Activated naive CD8-positive, alpha-beta T cell treated with anti-CD3 and anti-CD28 coated beads, Interleukin-2, amount 10 ng/mL, durations not matched to agents 7 days and 5 days (primary cell): ENCODE measurements at regions of chr16 and their contacts with region 1.

Region 1: DNA sequence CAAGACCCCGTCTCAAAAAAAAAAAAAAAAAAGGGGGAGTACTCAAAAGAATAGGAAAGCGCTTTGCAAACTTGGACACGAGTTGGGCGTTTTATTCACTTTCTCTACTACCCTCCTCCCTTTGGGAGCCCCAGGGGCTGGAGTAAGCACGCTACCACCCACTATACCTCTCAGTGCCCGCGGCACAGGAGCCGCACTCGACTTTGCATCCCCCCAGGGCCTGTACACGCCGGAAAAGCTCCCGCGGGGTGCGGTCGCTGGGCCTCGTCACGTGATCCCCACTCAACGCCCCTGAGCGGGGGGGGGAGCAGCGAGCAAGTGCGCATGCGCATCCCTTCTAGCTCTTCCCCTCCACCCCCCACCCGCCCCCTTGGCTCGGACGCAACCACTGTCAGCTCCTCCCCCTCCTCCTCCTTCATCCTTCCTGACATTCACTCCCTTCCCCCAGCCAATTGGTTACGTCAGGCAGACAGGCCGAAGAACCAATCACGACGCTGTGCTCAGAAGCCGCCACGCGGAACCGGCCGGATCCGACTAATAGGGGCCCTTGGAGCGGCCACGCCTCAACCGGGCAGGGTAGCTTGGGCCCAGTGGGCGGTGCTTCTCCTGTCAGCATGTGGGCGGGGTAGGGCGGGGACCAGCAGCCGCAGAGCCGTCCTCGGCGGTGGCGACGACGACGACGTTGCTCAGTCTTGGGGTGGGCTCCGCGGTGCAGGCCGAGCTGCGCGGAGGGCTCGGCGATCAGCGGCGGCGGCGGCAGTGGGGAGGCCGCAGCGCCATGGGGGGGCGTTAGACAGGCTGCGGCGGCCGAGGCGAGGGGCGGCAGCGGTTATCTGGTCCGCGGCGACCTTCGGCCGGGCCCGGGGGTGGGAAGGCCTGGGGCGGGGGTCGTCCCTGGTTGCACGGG is at the start of gene HAPSTR1:
- DNase-seq: peak; percentile 98
- ATAC-seq: peak; percentile 90
- H3K4me3 Mint-ChIP-seq: peak within 1 kb of the TSS; percentile 98
- H3K27ac Mint-ChIP-seq: peak within 1 kb of the TSS; percentile 99
- H3K4me1 Mint-ChIP-seq: peaks cover 22% of the 10 kb centered on the region
- H3K27me3 Mint-ChIP-seq: no peaks in the 10 kb centered on the region
- total RNA-seq, gene HAPSTR1: 71.6 to 72.2 TPM

Region 2: GRCh38 chr16:8868416-8869211 is 222.6 kb before region 1 on chr16 and contains the start of gene CARHSP1:
- POLR2A ChIA-PET with region 1: interaction called, 44 read pairs
- DNase-seq: peak; percentile 89
- ATAC-seq: peak; percentile 76
- H3K4me3 Mint-ChIP-seq: peak within 1 kb of the TSS; percentile 96
- H3K27ac Mint-ChIP-seq: peak within 1 kb of the TSS; percentile 97
- H3K4me1 Mint-ChIP-seq: peaks cover 40% of the 10 kb centered on the region
- H3K27me3 Mint-ChIP-seq: no peaks in the 10 kb centered on the region
- total RNA-seq, gene CARHSP1: 157 to 173 TPM

Region 3: DNA sequence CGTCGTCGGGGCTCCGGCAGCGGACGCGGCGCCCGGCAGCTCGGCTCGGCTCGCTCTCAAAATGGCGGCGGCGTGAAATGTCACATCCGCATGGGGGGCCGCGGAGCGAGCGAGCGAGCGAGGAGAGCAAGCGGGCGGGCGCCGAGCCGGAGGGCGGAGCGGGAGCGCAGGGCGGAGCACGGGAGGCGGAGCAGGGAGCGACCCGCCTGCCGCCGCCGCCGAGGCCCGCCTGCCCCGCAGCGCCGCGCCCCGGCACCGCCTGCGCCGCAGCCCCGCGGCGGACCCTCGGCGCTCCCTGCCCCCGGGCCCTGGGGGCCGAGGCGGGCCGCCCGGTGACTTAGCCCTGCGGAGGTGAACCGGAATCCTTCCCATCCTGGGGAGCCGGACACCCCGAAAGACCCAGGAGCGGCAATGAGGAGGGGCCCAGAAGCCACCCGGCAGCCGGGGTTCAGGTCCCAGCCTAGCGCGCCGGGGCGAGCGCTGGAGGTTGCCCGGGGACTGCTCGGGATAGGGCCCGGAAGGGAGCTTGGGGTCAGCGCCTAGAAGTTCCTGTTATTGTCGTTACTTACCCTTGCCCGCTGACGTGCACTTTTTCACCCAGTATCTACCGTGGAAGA is 127.3 kb before region 1 on chr16 and contains the start of gene USP7:
- POLR2A ChIA-PET with region 1: interaction called, 21 read pairs
- DNase-seq: peak; percentile 95
- ATAC-seq: peak; percentile 90
- H3K4me3 Mint-ChIP-seq: peak within 1 kb of the TSS; percentile 93
- H3K27ac Mint-ChIP-seq: peak within 1 kb of the TSS; percentile 93
- H3K4me1 Mint-ChIP-seq: peaks cover 39% of the 10 kb centered on the region
- H3K27me3 Mint-ChIP-seq: peaks cover 11% of the 10 kb centered on the region
- total RNA-seq, gene USP7: 153 to 162 TPM

Region 4: GRCh38 chr16:9027070-9027795 is 64.0 kb before region 1 on chr16:
- POLR2A ChIA-PET with region 1: no interaction called
- DNase-seq: no peak
- ATAC-seq: no peak
- H3K4me3 Mint-ChIP-seq: no peak overlapping the region
- H3K27ac Mint-ChIP-seq: no peak overlapping the region
- H3K4me1 Mint-ChIP-seq: no peaks in the 10 kb centered on the region
- H3K27me3 Mint-ChIP-seq: no peaks in the 10 kb centered on the region

Region 5: GRCh38 chr16:9061358-9061813 is 29.8 kb before region 1 on chr16:
- POLR2A ChIA-PET with region 1: interaction called, 11 read pairs
- DNase-seq: no peak
- ATAC-seq: peak; percentile 77
- H3K4me3 Mint-ChIP-seq: peak overlapping the region; percentile 62
- H3K27ac Mint-ChIP-seq: peak overlapping the region; percentile 40
- H3K4me1 Mint-ChIP-seq: peaks cover 9% of the 10 kb centered on the region
- H3K27me3 Mint-ChIP-seq: peaks cover 4% of the 10 kb centered on the region

Region 6: DNA sequence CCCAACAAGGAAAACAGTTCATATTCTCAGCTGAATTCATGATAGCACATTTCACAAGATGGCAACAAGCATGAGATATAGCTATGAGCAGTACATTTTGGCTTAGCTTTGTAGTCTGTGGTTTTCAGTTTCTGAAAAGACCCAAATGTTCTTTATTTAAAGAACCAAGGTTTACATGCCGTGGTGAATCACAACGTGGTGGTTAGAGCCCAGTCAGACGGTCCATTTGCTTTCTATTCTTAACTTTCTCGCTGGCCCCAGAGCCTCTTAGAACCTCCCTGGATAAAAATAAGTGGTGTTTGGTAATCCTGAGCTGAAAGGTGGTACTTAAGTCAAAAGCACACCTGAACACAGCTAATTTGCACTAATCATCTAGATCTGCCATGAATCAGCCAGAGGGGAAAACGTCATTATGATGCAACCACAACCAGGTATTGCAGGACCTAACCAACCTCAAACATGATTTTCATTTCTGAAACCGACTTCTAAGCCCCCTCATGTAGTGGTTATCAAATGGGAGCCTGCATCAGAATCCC is 18.3 kb before region 1 on chr16:
- POLR2A ChIA-PET with region 1: interaction called, 227 read pairs
- DNase-seq: no peak
- ATAC-seq: peak; percentile 66
- H3K4me3 Mint-ChIP-seq: peak overlapping the region; percentile 73
- H3K27ac Mint-ChIP-seq: peak overlapping the region; percentile 94
- H3K4me1 Mint-ChIP-seq: peaks cover 36% of the 10 kb centered on the region
- H3K27me3 Mint-ChIP-seq: no peaks in the 10 kb centered on the region

Region 7: DNA sequence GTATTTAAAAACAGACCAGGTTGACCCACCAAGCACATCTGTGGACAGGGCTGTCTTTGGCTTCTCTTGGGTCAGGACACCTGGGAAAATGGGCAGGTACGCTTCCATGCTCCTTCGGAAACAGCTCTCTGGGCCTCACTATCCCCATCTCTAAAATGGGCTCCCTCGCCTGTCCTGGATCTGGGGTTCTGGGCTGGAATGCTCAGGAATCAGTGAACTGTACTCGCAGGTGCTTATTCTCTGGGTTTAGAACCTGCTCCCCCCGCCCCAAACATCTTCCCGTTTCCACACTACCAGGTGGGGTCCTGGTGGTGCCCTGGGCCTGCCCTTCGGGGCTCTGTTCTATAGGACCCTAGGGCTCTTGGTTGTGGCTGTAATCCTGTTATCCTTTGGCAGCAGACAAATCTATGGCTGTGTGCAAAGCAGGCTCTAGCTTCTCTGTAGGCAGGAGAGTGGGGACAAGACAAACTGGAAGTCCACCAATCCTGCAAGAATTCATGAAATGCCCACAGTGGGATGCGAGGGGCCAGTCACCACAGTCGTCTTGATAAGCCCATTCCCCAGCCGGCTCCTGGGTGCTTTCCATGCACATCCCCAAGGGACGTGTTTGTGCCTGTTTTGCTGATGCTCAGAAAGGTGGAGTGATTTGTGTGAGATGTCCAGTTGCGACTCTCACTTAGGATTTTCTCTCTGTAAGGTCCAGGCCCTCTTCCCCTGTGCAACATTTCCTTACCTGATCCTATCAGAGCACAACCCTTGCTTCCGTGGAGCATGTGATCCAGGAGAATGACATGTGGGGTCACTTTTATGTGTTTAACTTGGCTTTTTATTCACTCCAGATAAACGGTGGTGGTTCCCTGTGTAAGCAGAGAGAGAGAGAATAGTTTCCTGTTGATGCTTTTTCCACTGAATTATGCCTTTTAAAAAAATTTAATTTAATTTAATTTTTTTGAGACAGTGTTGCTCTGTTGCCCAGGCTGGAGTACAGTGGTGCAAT is 37.4 kb after region 1 on chr16:
- POLR2A ChIA-PET with region 1: interaction called, 11 read pairs
- DNase-seq: no peak
- ATAC-seq: no peak
- H3K4me3 Mint-ChIP-seq: peak overlapping the region; percentile 14
- H3K27ac Mint-ChIP-seq: peak overlapping the region; percentile 76
- H3K4me1 Mint-ChIP-seq: peaks cover 37% of the 10 kb centered on the region
- H3K27me3 Mint-ChIP-seq: no peaks in the 10 kb centered on the region

Region 8: DNA sequence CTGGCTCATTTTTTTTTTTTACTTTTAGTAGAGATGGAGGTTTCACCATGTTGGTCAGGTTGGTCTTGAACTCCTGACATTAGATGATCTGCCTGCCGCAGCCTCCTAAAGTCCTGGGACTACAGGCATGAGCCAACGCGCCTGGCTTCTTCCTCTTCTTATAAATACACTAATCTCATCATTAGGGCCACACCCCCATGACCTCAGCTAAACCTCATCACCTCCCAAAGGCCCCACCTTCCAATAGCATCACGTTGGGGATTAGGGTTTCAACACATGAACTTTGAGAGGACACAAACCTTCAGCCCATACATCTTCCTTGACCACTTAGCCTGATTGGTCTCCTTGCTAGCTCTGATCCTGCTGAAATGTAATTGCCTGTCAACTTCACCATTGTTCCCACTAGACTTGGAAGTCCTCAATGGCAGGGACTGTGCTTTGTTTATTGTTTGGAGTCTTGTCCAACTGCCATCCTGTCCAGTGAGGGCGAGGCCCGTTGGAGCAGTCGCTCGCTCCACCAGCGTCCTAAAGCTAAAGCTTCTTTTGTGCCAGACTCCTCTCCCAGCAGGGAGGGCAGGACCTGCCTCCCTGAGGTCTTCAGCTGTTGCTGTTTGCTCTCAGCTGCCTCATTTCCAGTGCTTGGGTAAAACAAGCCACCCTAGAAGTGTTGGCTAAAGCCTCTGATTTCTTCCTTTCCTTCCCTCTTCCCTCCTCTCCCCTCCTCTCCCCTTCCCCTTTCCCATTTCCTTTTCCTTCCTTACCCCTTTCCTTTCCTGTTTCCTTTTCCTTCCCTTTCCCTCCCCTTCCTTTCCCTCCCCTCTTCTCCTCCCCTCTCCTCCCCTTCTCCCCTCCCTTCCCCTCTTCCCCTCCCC is 85.6 kb after region 1 on chr16:
- POLR2A ChIA-PET with region 1: no interaction called
- DNase-seq: no peak
- ATAC-seq: no peak
- H3K4me3 Mint-ChIP-seq: no peak overlapping the region
- H3K27ac Mint-ChIP-seq: no peak overlapping the region
- H3K4me1 Mint-ChIP-seq: no peaks in the 10 kb centered on the region
- H3K27me3 Mint-ChIP-seq: peaks cover 2% of the 10 kb centered on the region